ENCODE measurements at regions of chr1 and their contacts with region 1.

Region 1: DNA sequence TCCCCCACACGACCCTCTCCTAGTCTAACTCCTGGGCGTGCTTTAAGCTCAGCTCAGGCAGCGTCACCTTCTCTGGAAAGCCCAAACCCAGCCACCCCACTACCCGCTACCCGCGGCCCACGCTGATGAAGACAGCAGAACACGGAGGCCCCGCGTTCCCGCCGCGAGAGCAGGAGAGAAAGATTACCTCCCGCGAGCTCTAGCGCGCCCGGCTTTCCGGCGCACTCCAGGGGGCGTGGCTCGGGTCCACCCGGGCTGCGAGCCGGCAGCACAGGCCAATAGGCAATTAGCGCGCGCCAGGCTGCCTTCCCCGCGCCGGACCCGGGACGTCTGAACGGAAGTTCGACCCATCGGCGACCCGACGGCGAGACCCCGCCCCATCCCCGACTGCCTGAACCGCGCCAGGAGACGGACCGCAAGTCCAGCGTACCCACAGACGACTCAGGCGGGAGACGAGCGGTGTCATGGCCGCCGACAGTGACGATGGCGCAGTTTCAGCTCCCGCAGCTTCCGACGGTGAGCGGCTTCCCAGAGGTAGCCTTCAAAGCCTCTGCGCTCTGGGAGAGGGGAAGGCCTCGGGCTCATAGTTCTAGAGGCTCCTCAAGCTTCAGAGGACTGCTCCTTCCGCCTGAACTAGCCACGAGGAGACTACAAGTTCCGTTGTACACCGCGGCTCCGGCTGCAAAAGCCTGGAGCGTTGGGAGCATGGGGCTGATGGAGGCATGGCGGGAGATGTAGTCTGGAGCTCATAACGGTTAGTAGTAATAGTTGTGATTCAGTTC is at the starts of genes MUTYH and TOE1:
- DNase-seq: peak; percentile 79
- ATAC-seq: peak; percentile 90
- H3K4me3 ChIP-seq: peak within 1 kb of the TSS; percentile 93 to 94
- H3K27ac ChIP-seq: peak within 1 kb of the TSS; percentile 82
- H3K4me1 ChIP-seq: peaks cover 21 to 50% of the 10 kb centered on the region in 2 experiments
- H3K27me3 ChIP-seq: no peaks in the 10 kb centered on the region
- CTCF ChIP-seq: no peak
- POLR2A ChIP-seq: peak; percentile 46
- RAD21 ChIP-seq: no peak
- total RNA-seq, gene MUTYH: 44.8 TPM
- total RNA-seq, gene TOE1: 11.5 TPM

Region 2: DNA sequence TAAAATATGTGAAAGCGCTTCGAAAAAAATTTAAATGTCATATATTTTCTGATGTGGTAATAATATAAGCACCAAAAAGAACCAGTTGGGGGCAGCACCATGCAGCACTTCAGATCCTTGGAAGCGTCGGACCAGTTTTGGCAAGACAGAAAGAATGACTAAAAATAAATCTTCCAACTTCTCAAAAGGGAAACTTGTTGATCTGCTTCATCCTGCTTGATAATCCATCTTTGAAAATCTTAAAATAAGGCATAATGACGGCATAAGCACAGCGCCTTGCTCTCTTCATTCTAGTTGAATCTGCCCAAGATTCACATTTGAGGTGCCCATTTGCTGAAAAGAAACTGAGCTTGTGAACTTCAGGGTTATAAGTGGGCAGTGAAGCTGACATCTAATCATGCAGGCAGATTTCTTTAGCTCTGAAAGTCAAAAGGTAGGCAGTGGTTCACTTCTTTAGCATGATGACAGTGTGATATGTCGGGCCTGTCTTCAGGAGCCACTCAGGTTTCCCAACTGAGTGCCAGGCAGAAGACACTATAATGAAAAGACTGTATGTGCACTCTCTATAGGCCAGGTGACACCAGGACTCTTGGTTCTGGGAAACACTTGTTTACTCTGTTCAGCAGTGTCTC is 20.0 kb after region 1 on chr1:
- CTCF ChIA-PET with region 1: no interaction called
- POLR2A ChIA-PET with region 1: interaction called, 11 read pairs
- RAD21 ChIA-PET with region 1: interaction called in 1 of 2 experiments, 3 read pairs
- intact Hi-C with region 1: no loop called
- DNase-seq: no peak
- ATAC-seq: peak; percentile 70
- H3K4me3 ChIP-seq: no peak overlapping the region
- H3K27ac ChIP-seq: no peak overlapping the region
- H3K4me1 ChIP-seq: peaks cover 13 to 20% of the 10 kb centered on the region in 2 experiments
- H3K27me3 ChIP-seq: no peaks in the 10 kb centered on the region
- CTCF ChIP-seq: peak; percentile 60 to 76 (median 64)
- POLR2A ChIP-seq: no peak
- RAD21 ChIP-seq: peak; percentile 85

Region 3: GRCh38 chr1:45403298-45403697 is 63.3 kb after region 1 on chr1:
- CTCF ChIA-PET with region 1: no interaction called
- POLR2A ChIA-PET with region 1: no interaction called
- RAD21 ChIA-PET with region 1: no interaction called
- intact Hi-C with region 1: no loop called
- DNase-seq: no peak
- ATAC-seq: no peak
- H3K4me3 ChIP-seq: no peak overlapping the region
- H3K27ac ChIP-seq: no peak overlapping the region
- H3K4me1 ChIP-seq: no peaks in the 10 kb centered on the region
- H3K27me3 ChIP-seq: no peaks in the 10 kb centered on the region
- CTCF ChIP-seq: no peak
- POLR2A ChIP-seq: no peak
- RAD21 ChIP-seq: no peak